ENCODE measurements at regions of chr10 and their contacts with region 1.

Region 1: GRCh38 chr10:59625721-59626522 is 83.7 kb downstream of the SLC16A9 start:
- DNase-seq: peak; percentile 48 to 66 (median 61)
- H3K4me3 ChIP-seq: no peak overlapping the region
- H3K4me3 Mint-ChIP-seq: no peak overlapping the region
- H3K27ac ChIP-seq: no peak overlapping the region
- H3K27ac Mint-ChIP-seq: peak overlapping the region in 1 of 7 donors; percentile 3
- H3K4me1 ChIP-seq: no peaks in the 10 kb centered on the region
- H3K4me1 Mint-ChIP-seq: peaks cover 0 to 4% (median 2%) of the 10 kb centered on the region in 4 donors
- H3K27me3 ChIP-seq: no peaks in the 10 kb centered on the region
- H3K27me3 Mint-ChIP-seq: peaks cover 1 to 4% of the 10 kb centered on the region in 2 donors

Region 2: GRCh38 chr10:58177362-58177947 is 1448.5 kb before region 1 on chr10:
- CTCF ChIA-PET with region 1: no interaction called
- POLR2A ChIA-PET with region 1: no interaction called
- intact Hi-C with region 1: loop called (anchors 5 kb)
- DNase-seq: peak in 4 of 5 donors; percentile 5 to 14 (median 10)
- H3K4me3 ChIP-seq: no peak overlapping the region
- H3K4me3 Mint-ChIP-seq: no peak overlapping the region
- H3K27ac ChIP-seq: no peak overlapping the region
- H3K27ac Mint-ChIP-seq: no peak overlapping the region
- H3K4me1 ChIP-seq: no peaks in the 10 kb centered on the region
- H3K4me1 Mint-ChIP-seq: no peaks in the 10 kb centered on the region
- H3K27me3 ChIP-seq: no peaks in the 10 kb centered on the region
- H3K27me3 Mint-ChIP-seq: peaks cover 2 to 5% of the 10 kb centered on the region in 2 donors

Region 3: DNA sequence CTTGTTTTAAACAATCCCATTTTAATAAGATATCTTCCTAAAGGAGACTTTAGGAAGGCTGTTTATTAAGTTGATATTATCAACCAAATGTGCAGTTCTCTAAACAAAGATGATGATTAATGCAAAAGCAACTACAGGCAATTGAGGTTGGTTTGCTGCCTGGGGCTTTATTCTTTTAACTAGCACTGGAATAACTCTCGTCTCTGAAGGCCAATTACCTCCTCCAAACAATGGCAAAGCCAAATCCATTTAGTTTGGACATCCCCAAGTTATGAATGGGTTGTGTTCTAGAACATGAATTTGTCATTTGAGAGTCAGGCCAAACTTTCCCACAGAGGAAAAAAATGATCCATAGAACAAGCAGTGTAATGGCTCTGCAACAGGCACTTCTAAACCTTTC is 30.3 kb before region 1 on chr10:
- CTCF ChIA-PET with region 1: no interaction called
- POLR2A ChIA-PET with region 1: no interaction called
- intact Hi-C with region 1: no loop called
- DNase-seq: no peak
- H3K4me3 ChIP-seq: no peak overlapping the region
- H3K4me3 Mint-ChIP-seq: no peak overlapping the region
- H3K27ac ChIP-seq: no peak overlapping the region
- H3K27ac Mint-ChIP-seq: no peak overlapping the region
- H3K4me1 ChIP-seq: no peaks in the 10 kb centered on the region
- H3K4me1 Mint-ChIP-seq: peaks cover 0 to 1% (median 0%) of the 10 kb centered on the region in 4 donors
- H3K27me3 ChIP-seq: no peaks in the 10 kb centered on the region
- H3K27me3 Mint-ChIP-seq: peaks cover under 1 to 8% of the 10 kb centered on the region in 2 donors

Region 4: GRCh38 chr10:59611043-59611442 is 14.9 kb before region 1 on chr10:
- CTCF ChIA-PET with region 1: interaction called, 17 read pairs
- POLR2A ChIA-PET with region 1: no interaction called
- intact Hi-C with region 1: no loop called
- DNase-seq: no peak
- H3K4me3 ChIP-seq: no peak overlapping the region
- H3K4me3 Mint-ChIP-seq: no peak overlapping the region
- H3K27ac ChIP-seq: no peak overlapping the region
- H3K27ac Mint-ChIP-seq: no peak overlapping the region
- H3K4me1 ChIP-seq: no peaks in the 10 kb centered on the region
- H3K4me1 Mint-ChIP-seq: no peaks in the 10 kb centered on the region
- H3K27me3 ChIP-seq: no peaks in the 10 kb centered on the region
- H3K27me3 Mint-ChIP-seq: peaks cover 4 to 8% of the 10 kb centered on the region in 2 donors

Region 5: GRCh38 chr10:59830601-59831259 is 204.8 kb after region 1 on chr10:
- CTCF ChIA-PET with region 1: interaction called, 11 read pairs
- POLR2A ChIA-PET with region 1: no interaction called
- intact Hi-C with region 1: loop called (anchors 1 kb)
- DNase-seq: peak in 3 of 5 donors; percentile 5 to 14 (median 11)
- H3K4me3 ChIP-seq: no peak overlapping the region
- H3K4me3 Mint-ChIP-seq: no peak overlapping the region
- H3K27ac ChIP-seq: no peak overlapping the region
- H3K27ac Mint-ChIP-seq: peak overlapping the region in 1 of 7 donors; percentile 14
- H3K4me1 ChIP-seq: no peaks in the 10 kb centered on the region
- H3K4me1 Mint-ChIP-seq: peaks cover 18 to 49% (median 34%) of the 10 kb centered on the region in 4 donors
- H3K27me3 ChIP-seq: no peaks in the 10 kb centered on the region
- H3K27me3 Mint-ChIP-seq: no peaks in the 10 kb centered on the region

Region 6: DNA sequence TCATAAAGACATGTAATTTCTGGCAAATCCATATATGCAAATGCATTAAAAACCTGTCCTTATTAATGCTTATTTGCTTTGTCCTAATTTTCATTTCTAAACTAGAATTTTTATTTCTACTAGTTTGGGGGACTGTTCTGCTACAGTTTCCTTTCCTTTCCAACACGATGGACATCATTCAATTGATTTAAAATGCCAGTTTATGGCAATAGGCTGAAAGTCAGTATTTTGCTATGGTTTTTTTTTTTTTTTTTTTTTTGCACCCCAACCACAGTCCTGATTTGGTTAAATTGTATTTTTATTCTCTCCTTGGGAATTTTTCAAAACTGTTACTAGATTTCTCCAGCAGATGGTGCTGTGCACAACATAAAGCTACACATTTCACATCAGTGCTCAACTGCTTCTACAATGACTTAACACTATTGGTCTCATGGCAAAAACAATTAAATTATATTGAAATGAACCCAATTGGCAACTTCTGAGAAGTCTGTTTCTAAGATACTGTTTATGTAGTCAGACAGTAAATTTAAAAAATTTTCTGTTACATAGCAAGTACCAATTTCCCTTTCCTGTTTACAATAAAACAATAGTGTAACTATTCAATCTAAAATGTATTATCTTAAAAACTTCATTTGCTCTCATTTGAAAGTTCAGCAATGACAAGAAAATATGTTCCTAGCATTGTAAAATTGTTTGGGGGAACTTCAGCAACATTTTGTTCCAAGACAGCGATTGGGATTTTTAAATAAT is 474.3 kb after region 1 on chr10:
- CTCF ChIA-PET with region 1: no interaction called
- POLR2A ChIA-PET with region 1: no interaction called
- intact Hi-C with region 1: loop called (anchors 5 kb)
- DNase-seq: peak in 4 of 5 donors; percentile 23 to 38 (median 34)
- H3K4me3 ChIP-seq: no peak overlapping the region
- H3K4me3 Mint-ChIP-seq: no peak overlapping the region
- H3K27ac ChIP-seq: no peak overlapping the region
- H3K27ac Mint-ChIP-seq: peak overlapping the region in 1 of 7 donors; percentile 1
- H3K4me1 ChIP-seq: no peaks in the 10 kb centered on the region
- H3K4me1 Mint-ChIP-seq: peaks cover 0 to 4% (median under 1%) of the 10 kb centered on the region in 4 donors
- H3K27me3 ChIP-seq: no peaks in the 10 kb centered on the region
- H3K27me3 Mint-ChIP-seq: no peaks in the 10 kb centered on the region

Region 7: DNA sequence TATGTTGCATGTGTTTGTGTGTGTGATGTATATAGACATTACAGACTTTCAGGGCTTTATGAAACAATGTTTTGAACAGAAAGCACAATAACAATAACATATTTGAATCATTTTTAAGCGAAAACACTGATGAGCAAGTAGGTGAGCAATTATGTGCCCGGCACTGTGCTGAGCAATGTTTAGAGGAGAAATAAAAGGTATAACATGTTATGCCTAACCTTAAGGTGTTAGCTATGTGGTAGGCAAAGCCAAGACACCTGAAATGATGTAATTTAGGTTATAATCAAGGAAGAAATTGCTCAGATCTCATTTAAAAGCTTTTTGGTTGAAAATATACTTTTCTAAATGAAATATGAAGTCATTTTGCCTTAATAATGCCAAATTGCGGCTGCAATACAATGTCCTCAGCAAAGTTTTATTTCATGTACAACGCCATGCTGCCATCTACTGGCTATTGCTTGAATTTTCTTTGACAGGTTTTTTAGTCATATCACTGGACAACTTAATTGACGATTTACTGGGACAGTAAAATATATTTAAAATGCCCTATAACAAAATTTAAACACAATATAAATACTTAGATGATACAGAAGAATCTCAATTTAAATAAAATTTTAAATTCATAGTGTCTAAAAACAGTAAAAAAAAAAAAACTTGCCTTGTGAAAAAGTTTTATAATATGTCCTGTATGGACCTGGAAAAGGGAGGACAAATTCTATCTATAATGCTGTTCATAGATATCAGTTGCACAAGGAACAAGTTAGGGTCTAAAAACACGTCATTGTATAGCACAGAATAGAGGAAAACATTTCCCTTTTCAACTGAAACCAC is 1021.3 kb after region 1 on chr10:
- CTCF ChIA-PET with region 1: interaction called, 6 read pairs
- POLR2A ChIA-PET with region 1: no interaction called
- intact Hi-C with region 1: loop called (anchors 1 kb)
- DNase-seq: peak; percentile 45 to 59 (median 51)
- H3K4me3 ChIP-seq: no peak overlapping the region
- H3K4me3 Mint-ChIP-seq: no peak overlapping the region
- H3K27ac ChIP-seq: no peak overlapping the region
- H3K27ac Mint-ChIP-seq: peak overlapping the region in 3 of 7 donors; percentile 7 to 34 (median 14)
- H3K4me1 ChIP-seq: peaks cover 24% of the 10 kb centered on the region
- H3K4me1 Mint-ChIP-seq: peaks cover 34 to 46% (median 35%) of the 10 kb centered on the region in 4 donors
- H3K27me3 ChIP-seq: no peaks in the 10 kb centered on the region
- H3K27me3 Mint-ChIP-seq: no peaks in the 10 kb centered on the region

Region 8: GRCh38 chr10:60964257-60965235 is 1338.6 kb after region 1 on chr10:
- CTCF ChIA-PET with region 1: interaction called, 5 read pairs
- POLR2A ChIA-PET with region 1: no interaction called
- intact Hi-C with region 1: loop called (anchors 1 kb)
- DNase-seq: peak; percentile 32 to 41 (median 33)
- H3K4me3 ChIP-seq: no peak overlapping the region
- H3K4me3 Mint-ChIP-seq: no peak overlapping the region
- H3K27ac ChIP-seq: no peak overlapping the region
- H3K27ac Mint-ChIP-seq: no peak overlapping the region
- H3K4me1 ChIP-seq: no peaks in the 10 kb centered on the region
- H3K4me1 Mint-ChIP-seq: peaks cover 0 to 2% (median under 1%) of the 10 kb centered on the region in 4 donors
- H3K27me3 ChIP-seq: peaks cover 10% of the 10 kb centered on the region
- H3K27me3 Mint-ChIP-seq: peaks cover 15 to 25% of the 10 kb centered on the region in 2 donors

Measured in CD4-positive, alpha-beta memory T cell (primary cell).